ENCODE measurements at regions of chrX and their contacts with region 1.

Region 1: GRCh38 chrX:132059973-132060540 is 37.0 kb downstream of the STK26 start:
- DNase-seq: no peak
- ATAC-seq: no peak
- H3K4me3 ChIP-seq: no peak overlapping the region
- H3K27ac ChIP-seq: no peak overlapping the region
- H3K4me1 ChIP-seq: no peaks in the 10 kb centered on the region
- H3K27me3 ChIP-seq: peaks cover 0 to 4% of the 10 kb centered on the region in 2 donors
- CTCF ChIP-seq: no peak
- POLR2A ChIP-seq: no peak

Region 2: GRCh38 chrX:131841496-131842410 is 218.3 kb before region 1 on chrX:
- intact Hi-C with region 1: loop called in 1 of 2 experiments (anchors 10 kb)
- DNase-seq: peak in 1 of 3 donors; percentile 39
- ATAC-seq: peak; percentile 82 to 91 (median 88)
- H3K4me3 ChIP-seq: no peak overlapping the region
- H3K27ac ChIP-seq: no peak overlapping the region
- H3K4me1 ChIP-seq: no peaks in the 10 kb centered on the region
- H3K27me3 ChIP-seq: peaks cover 0 to 17% of the 10 kb centered on the region in 2 donors
- CTCF ChIP-seq: peak; percentile 85 to 90 (median 88)
- POLR2A ChIP-seq: no peak

Region 3: DNA sequence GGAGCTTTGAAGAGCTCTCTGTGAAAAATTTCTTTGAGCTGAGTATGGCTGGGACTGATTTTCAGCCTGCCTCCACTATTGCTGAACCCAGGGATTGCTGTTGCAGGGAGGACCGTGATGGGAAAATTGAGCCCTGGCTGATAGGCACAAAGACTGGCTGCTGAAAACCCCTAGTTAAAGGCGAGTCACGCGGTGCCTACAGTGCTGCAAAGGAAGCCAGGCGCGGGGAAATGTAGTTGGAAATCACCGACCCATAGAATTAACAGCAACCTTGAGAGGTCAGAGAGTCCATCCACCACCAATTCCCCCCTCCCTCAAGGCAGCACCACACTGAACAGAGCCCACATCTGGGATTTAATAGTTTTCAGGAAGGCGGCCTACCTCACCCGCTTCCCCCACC is 41.7 kb after region 1 on chrX:
- intact Hi-C with region 1: no loop called
- DNase-seq: no peak
- ATAC-seq: no peak
- H3K4me3 ChIP-seq: no peak overlapping the region
- H3K27ac ChIP-seq: no peak overlapping the region
- H3K4me1 ChIP-seq: no peaks in the 10 kb centered on the region
- H3K27me3 ChIP-seq: no peaks in the 10 kb centered on the region
- CTCF ChIP-seq: no peak
- POLR2A ChIP-seq: no peak